A549 (cell line): ENCODE measurements at regions of chr9 and their contacts with region 1.

Region 1: DNA sequence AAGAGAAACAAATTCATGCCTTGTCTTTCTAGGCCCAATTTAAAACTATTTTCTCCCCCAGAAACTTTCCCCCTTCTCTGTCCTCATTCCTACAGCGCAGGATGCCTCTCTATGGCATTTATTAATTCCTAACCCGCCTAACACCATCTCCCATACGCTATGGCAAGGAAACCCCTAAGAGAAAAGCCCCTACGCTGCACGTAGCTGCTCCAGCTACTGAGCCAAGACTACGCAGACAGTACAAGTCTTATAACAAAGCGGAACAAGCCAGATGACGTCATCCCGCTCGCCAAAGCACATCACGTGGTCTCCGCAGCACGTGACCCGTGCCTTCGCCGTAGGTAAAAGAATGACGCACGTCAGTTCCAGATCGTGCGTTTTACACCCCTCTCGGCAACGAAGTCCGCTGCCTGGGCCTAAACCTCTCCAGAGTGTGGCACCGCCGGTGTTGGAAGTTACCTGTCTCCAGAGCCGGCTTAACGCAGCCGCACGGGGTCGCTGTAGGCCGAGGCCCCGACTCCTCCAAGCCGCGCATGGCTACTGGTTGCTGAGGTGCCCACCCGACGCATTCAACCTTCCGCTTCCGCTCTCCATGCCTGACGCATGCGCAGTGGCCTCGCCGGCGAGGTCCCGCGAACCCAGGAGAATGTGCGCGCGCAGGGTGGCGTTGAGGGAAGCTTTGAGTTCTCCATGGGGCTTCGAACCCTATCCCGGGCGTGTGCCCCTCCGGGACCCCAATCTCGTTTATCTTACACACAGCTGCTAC is at the start of gene TRMO:
- DNase-seq: peak; percentile 90 to 99
- ATAC-seq: peak; percentile 91 to 92
- H3K4me3 ChIP-seq: peak within 1 kb of the TSS; percentile 55
- H3K27ac ChIP-seq: peak within 1 kb of the TSS; percentile 94 to 95
- H3K4me1 ChIP-seq: 0 out of 3 replicates have a peak, but pooled peaks cover 5% of the 10 kb centered on the region
- CTCF ChIP-seq: peak; percentile 70
- EP300 ChIP-seq: no peak
- POLR2A ChIP-seq: peak; percentile 85
- RAD21 ChIP-seq: peak in 1 of 2 experiments; percentile 45; a peak in 3 of 5 replicates
- polyA plus RNA-seq, gene TRMO: 18.8 and 19.4 TPM in 2 replicates

Region 2: GRCh38 chr9:97682242-97682641 is 239.9 kb before region 1 on chr9:
- CTCF ChIA-PET with region 1: no interaction called
- POLR2A ChIA-PET with region 1: no interaction called
- DNase-seq: no peak
- ATAC-seq: no peak
- H3K4me3 ChIP-seq: no peak overlapping the region
- H3K27ac ChIP-seq: no peak overlapping the region
- H3K4me1 ChIP-seq: no peaks in the 10 kb centered on the region
- CTCF ChIP-seq: no peak
- EP300 ChIP-seq: no peak
- POLR2A ChIP-seq: no peak
- RAD21 ChIP-seq: no peak

Region 3: DNA sequence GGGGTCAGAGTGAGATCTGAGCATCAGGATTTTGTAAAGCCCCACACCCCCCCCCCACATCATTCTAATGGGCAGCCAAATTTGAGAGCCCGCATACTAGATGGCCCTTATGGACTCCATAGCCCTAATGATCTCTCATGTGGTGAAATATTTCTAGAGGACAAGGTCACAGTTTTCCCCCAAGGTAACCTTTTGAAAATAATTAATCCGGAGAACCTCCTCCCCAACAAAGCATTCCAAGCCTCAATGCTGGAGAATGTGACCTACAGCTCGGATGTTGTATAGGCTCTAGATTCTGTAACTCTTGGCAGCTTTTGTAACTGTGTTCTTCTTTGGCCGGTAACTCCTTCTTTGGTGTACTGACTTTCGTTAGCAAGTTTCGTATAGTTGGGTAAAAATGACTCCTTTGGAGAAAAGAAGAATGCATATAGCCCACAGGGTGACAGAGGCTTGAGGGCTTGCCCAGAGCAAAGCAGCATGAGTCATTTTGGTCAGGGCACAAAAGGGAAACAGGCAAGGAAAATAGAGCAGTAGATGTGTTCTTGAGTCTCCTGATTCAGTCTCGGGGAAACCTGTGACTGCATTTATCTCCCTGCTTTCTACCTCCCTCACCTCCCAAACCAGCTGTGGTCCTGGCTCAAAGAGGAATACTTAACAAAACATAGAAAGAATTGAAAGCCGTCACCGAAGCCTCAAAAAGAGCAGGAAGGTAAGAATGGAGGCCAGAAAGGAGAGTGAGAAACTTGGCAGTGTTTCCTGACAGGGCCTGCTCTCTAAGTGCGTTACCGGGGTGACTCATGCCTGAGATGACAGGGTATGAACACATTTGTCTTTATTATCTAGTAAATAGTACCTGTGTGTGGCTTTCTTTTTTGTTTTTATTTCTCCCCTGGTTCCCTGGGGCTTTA is 218.5 kb before region 1 on chr9:
- CTCF ChIA-PET with region 1: interaction called, 12 read pairs
- POLR2A ChIA-PET with region 1: interaction called, 14 read pairs
- DNase-seq: peak; percentile 50 to 70
- ATAC-seq: peak; percentile 88 to 91
- H3K4me3 ChIP-seq: no peak overlapping the region
- H3K27ac ChIP-seq: peak overlapping the region; percentile 55 to 82
- H3K4me1 ChIP-seq: peaks cover 24% of the 10 kb centered on the region
- CTCF ChIP-seq: no peak
- EP300 ChIP-seq: no peak
- POLR2A ChIP-seq: no peak
- RAD21 ChIP-seq: no peak

Region 4: DNA sequence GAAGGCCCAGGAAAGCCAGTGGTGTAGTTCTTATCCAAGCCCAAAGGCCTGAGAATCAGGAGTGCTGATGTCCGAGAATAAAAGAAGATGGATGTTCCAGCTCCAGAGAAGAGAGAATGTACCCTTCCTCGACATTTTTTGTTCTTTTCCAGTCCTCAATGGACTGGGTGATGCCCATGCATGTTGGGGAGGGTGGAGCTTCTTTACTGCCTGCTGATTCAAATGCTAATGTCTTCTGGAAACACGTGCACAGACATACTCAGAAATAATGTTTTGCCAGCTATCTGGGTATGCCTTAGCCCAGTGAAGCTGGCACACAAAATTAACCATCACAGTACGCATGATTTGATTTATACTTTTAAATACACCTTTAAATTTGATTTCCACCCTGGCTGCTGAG is 130.6 kb before region 1 on chr9:
- CTCF ChIA-PET with region 1: no interaction called
- POLR2A ChIA-PET with region 1: no interaction called
- DNase-seq: no peak
- ATAC-seq: no peak
- H3K4me3 ChIP-seq: no peak overlapping the region
- H3K27ac ChIP-seq: no peak overlapping the region
- H3K4me1 ChIP-seq: peaks cover 12% of the 10 kb centered on the region
- CTCF ChIP-seq: no peak
- EP300 ChIP-seq: no peak
- POLR2A ChIP-seq: no peak
- RAD21 ChIP-seq: no peak

Region 5: GRCh38 chr9:97890038-97890437 is 32.1 kb before region 1 on chr9:
- CTCF ChIA-PET with region 1: interaction called, 11 read pairs
- POLR2A ChIA-PET with region 1: no interaction called
- DNase-seq: peak; percentile 21 to 46
- ATAC-seq: peak in 1 of 2 experiments; percentile 72; a peak in 3 of 6 replicates
- H3K4me3 ChIP-seq: no peak overlapping the region
- H3K27ac ChIP-seq: no peak overlapping the region
- H3K4me1 ChIP-seq: no peaks in the 10 kb centered on the region
- CTCF ChIP-seq: peak; percentile 50
- EP300 ChIP-seq: no peak
- POLR2A ChIP-seq: no peak
- RAD21 ChIP-seq: no peak; a peak in 1 of 5 replicates

Region 6: DNA sequence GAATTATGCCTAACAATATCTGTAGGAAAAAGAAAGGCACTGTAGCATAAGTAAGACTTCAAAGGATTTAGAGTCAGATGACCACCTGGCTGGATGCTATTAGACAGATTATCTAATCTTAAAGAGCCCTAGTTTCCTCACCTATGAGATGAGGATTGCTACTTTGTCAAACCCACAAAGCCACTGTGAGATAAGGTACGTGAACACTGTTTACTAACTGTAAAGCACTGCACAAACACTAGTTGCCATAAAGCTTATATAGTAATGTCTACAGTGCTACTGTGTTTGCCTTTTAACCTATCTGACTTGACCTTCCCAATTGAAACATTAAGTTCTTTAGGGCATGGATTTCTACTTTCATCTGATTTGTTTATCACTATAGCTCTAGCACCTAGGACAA is 10.2 kb before region 1 on chr9:
- CTCF ChIA-PET with region 1: interaction called, 51 read pairs
- POLR2A ChIA-PET with region 1: interaction called, 5 read pairs
- DNase-seq: no peak
- ATAC-seq: no peak
- H3K4me3 ChIP-seq: no peak overlapping the region
- H3K27ac ChIP-seq: no peak overlapping the region
- H3K4me1 ChIP-seq: no peaks in the 10 kb centered on the region
- CTCF ChIP-seq: no peak
- EP300 ChIP-seq: no peak
- POLR2A ChIP-seq: no peak
- RAD21 ChIP-seq: no peak

Region 7: DNA sequence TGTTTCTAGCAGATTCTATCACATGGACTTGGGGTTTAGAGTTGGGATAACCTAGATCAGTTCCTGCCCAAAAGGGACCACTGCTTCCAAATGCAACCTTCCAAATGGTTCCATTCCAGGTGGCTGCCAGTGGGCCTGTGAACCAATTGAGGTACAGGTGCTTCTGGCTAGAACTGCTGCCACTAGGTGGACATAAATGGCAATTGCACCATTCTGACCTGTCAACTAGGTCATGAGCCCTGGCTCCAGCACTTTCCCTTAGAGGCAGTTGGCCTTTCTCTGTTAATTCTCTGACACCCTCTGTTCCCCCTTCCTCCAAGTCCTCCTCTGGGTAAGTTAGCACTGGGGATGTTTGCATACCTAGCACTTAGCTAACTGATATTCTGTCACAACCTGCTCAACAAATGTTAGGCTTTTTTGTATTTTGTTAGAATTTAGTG is 32.4 kb after region 1 on chr9:
- CTCF ChIA-PET with region 1: interaction called, 116 read pairs
- POLR2A ChIA-PET with region 1: interaction called, 4 read pairs
- DNase-seq: peak; percentile 70 to 76
- ATAC-seq: peak; percentile 94 to 98
- H3K4me3 ChIP-seq: no peak overlapping the region
- H3K27ac ChIP-seq: no peak overlapping the region
- H3K4me1 ChIP-seq: no peaks in the 10 kb centered on the region
- CTCF ChIP-seq: peak; percentile 57
- EP300 ChIP-seq: no peak
- POLR2A ChIP-seq: no peak
- RAD21 ChIP-seq: peak; percentile 53 to 56

Region 8: GRCh38 chr9:97982683-97983588 is 60.8 kb after region 1 on chr9 and contains the start of gene ANP32B:
- CTCF ChIA-PET with region 1: interaction called, 35 read pairs
- POLR2A ChIA-PET with region 1: interaction called, 7 read pairs
- DNase-seq: peak; percentile 72 to 90
- ATAC-seq: peak; percentile 73 to 93
- H3K4me3 ChIP-seq: peak within 1 kb of the TSS; percentile 86
- H3K27ac ChIP-seq: peak within 1 kb of the TSS; percentile 99
- H3K4me1 ChIP-seq: peaks cover 37% of the 10 kb centered on the region
- CTCF ChIP-seq: peak; percentile 70
- EP300 ChIP-seq: no peak
- POLR2A ChIP-seq: peak; percentile 58
- RAD21 ChIP-seq: 0 out of 5 replicates have a peak, but pooled peaks of 1 of the 2 experiments have one; percentile 18
- polyA plus RNA-seq, gene ANP32B: 97.0 and 127 TPM in 2 replicates

Region 9: GRCh38 chr9:98034593-98035546 is 112.7 kb after region 1 on chr9:
- CTCF ChIA-PET with region 1: interaction called, 26 read pairs
- POLR2A ChIA-PET with region 1: no interaction called
- DNase-seq: peak; percentile 83 to 84
- ATAC-seq: peak; percentile 96 to 97
- H3K4me3 ChIP-seq: no peak overlapping the region
- H3K27ac ChIP-seq: no peak overlapping the region
- H3K4me1 ChIP-seq: no peaks in the 10 kb centered on the region
- CTCF ChIP-seq: peak; percentile 71
- EP300 ChIP-seq: no peak
- POLR2A ChIP-seq: no peak
- RAD21 ChIP-seq: peak; percentile 50 to 52; a peak in 4 of 5 replicates